A673 (cell line): ENCODE measurements at regions of chr2 and their contacts with region 1.

Region 1: GRCh38 chr2:223970343-223971128 is 13.3 kb downstream of the MRPL44 start:
- DNase-seq: peak; percentile 82
- H3K4me3 ChIP-seq: no peak overlapping the region
- H3K27ac ChIP-seq: peak overlapping the region; percentile 19
- H3K4me1 ChIP-seq: peaks cover 28% of the 10 kb centered on the region
- H3K27me3 ChIP-seq: no peaks in the 10 kb centered on the region
- CTCF ChIP-seq: peak; percentile 96

Region 2: DNA sequence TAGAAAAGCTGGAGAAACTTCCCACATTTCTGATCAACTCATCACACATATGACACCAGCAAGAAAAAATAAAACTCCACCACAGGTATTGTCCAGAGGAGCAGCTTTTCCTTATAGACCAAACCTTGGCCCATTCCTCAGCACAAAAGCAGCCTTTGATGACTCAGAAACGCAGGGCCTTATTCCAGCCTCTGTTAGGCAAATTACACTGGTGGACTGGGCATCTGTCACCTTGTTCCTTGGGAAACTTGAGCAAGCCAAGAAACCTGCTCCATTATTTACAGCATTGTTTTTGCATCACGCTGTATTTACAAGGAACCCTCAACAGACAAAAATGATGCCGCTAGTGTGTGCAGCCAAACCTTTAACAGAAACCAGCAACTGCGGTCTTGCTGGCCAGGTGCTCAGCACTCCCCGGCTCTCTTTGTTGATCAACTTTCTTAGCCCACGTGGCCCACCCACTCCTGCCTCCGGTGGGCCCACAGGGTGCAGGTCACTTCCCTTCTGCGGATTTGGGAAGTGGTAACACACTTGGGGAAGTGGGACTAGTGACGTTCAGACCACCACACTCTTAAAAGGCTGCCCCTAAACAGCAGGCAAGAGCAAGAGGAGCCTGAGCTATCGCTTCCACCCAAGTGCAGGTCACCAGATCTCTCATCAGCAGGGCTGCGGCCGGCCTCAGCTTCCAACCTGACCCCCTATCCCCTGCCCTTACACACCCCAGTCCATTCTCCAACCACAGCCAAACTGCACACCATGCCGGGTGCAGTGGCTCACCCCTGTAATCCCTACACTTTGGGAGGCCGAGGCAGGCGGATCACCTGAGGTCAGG is 134.6 kb before region 1 on chr2:
- CTCF ChIA-PET with region 1: no interaction called
- POLR2A ChIA-PET with region 1: no interaction called
- intact Hi-C with region 1: no loop called
- DNase-seq: no peak
- H3K4me3 ChIP-seq: peak overlapping the region; percentile 83
- H3K27ac ChIP-seq: no peak overlapping the region
- H3K4me1 ChIP-seq: peaks cover 14% of the 10 kb centered on the region
- H3K27me3 ChIP-seq: no peaks in the 10 kb centered on the region
- CTCF ChIP-seq: no peak

Region 3: DNA sequence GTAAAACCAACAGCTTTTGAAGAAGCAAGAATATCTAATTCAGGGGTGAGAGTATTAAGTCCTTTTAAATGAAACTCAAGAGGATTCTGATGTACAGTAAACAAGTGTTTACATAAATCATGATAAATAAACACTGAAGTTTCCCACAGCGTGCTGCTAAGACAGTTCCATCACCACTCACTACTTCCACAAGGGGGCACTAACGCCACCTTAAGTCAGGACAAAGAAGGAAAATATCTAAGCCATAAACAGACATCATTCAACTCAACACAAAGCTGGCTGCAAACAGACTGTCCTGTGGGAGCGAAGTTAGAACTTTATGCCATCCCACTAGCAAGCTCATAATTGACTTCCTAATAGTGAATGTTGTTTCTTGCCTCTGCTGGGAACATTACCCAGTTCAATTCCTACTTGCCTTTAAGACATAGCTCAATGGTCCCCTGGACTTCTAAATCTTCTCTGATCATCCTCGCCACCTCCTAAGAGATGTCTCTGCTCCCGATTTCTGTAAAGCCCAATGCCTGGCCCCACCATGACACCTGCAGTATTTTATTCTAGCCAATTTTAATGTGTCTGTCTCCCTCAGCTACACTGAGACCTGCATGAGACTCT is 23.2 kb after region 1 on chr2:
- CTCF ChIA-PET with region 1: interaction called, 11 read pairs
- POLR2A ChIA-PET with region 1: no interaction called
- intact Hi-C with region 1: no loop called
- DNase-seq: peak; percentile 92
- H3K4me3 ChIP-seq: no peak overlapping the region
- H3K27ac ChIP-seq: peak overlapping the region; percentile 54
- H3K4me1 ChIP-seq: peaks cover 21% of the 10 kb centered on the region
- H3K27me3 ChIP-seq: no peaks in the 10 kb centered on the region
- CTCF ChIP-seq: peak; percentile 91

Region 4: DNA sequence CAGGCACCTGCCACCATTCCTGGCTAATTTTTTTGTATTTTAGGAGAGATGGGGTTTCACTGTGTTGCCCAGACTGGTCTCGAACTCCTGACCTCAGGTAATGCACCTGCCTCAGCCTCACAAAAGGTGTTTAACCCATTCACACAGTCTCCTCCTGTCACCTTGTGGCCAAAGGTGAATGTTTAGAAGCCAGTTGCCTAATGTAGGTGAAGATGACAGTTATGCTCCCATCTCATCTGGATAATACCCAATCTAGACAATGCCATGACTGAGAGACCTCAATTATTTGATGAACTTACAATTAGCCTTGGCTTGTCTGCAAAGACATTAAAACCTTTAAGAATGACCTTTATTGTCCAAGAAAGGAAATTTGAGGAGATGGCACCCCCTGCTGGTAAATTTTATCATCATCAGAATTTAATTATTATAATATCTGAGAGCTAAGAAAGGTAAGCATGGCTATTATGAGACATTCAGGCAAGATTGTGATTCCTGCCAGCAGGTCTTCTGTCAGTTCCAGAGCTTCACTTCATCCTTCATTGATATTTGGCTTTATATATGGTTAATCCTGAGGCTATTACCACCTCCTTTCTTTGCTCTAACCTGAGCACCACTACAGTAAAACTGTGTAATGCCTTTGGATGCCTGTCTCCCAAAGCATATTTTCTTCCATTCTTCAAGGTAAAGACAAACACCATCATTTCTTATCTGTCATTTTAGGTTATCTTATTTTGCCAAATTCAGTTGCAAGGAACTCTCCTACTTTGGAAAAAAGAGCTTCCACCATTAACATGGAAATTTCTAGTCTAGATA is 313.8 kb after region 1 on chr2:
- CTCF ChIA-PET with region 1: interaction called, 19 read pairs
- POLR2A ChIA-PET with region 1: no interaction called
- intact Hi-C with region 1: loop called (anchors 1 kb)
- DNase-seq: peak; percentile 75
- H3K4me3 ChIP-seq: no peak overlapping the region
- H3K27ac ChIP-seq: peak overlapping the region; percentile 15
- H3K4me1 ChIP-seq: peaks cover 48% of the 10 kb centered on the region
- H3K27me3 ChIP-seq: no peaks in the 10 kb centered on the region
- CTCF ChIP-seq: peak; percentile 68

Region 5: GRCh38 chr2:224369028-224369632 is 398.6 kb after region 1 on chr2:
- CTCF ChIA-PET with region 1: interaction called, 6 read pairs
- POLR2A ChIA-PET with region 1: no interaction called
- intact Hi-C with region 1: loop called (anchors 2 kb)
- DNase-seq: peak; percentile 81
- H3K4me3 ChIP-seq: no peak overlapping the region
- H3K27ac ChIP-seq: no peak overlapping the region
- H3K4me1 ChIP-seq: peaks cover 15% of the 10 kb centered on the region
- H3K27me3 ChIP-seq: no peaks in the 10 kb centered on the region
- CTCF ChIP-seq: peak; percentile 84

Region 6: GRCh38 chr2:224449212-224450147 is 478.9 kb after region 1 on chr2:
- CTCF ChIA-PET with region 1: interaction called, 5 read pairs
- POLR2A ChIA-PET with region 1: no interaction called
- intact Hi-C with region 1: loop called (anchors 10 kb)
- DNase-seq: peak; percentile 38
- H3K4me3 ChIP-seq: no peak overlapping the region
- H3K27ac ChIP-seq: no peak overlapping the region
- H3K4me1 ChIP-seq: no peaks in the 10 kb centered on the region
- H3K27me3 ChIP-seq: no peaks in the 10 kb centered on the region
- CTCF ChIP-seq: peak; percentile 75

Region 7: DNA sequence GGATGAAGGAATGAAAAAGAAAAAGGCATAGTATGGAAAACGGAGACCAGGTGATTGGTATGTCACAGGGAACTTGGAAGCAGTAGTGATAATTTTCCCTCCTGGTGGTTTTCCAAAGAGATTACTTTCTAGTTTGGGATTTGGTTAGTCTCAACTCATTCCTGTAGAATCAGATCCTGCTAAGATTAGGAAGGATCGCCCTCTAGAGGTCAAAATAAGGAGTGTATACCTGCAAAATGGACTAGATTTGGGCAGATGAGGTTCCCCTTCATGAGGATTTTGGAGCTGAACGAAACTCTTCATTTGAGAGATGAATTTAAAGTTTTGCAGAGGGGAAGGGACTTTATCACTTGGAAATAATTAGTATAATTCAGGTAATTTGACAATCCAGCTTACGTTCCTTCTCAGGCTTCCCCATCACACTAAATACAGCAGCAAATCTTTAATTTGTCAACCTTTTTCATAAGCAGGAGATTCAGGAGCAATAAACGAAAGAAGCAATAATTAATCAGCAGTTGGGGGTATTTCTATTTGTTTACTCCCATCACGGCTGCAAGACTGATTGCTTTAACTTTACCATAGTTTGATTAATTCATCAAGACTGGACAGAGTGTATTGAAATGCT is 680.4 kb after region 1 on chr2:
- CTCF ChIA-PET with region 1: no interaction called
- POLR2A ChIA-PET with region 1: no interaction called
- intact Hi-C with region 1: loop called (anchors 10 kb)
- DNase-seq: peak; percentile 70
- H3K4me3 ChIP-seq: no peak overlapping the region
- H3K27ac ChIP-seq: no peak overlapping the region
- H3K4me1 ChIP-seq: peaks cover 4% of the 10 kb centered on the region
- H3K27me3 ChIP-seq: no peaks in the 10 kb centered on the region
- CTCF ChIP-seq: peak; percentile 83